Colonic mucosa (tissue), 4 donors: ENCODE measurements at regions of chr2 and their contacts with region 1.

Region 1: GRCh38 chr2:98412751-98413458 is 31.8 kb upstream of the INPP4A start:
- DNase-seq: peak; percentile 68
- H3K4me3 ChIP-seq: no peak overlapping the region
- H3K27ac ChIP-seq: no peak overlapping the region
- H3K4me1 ChIP-seq: no peaks in the 10 kb centered on the region
- H3K27me3 ChIP-seq: no peaks in the 10 kb centered on the region
- CTCF ChIP-seq: peak; percentile 57

Region 2: DNA sequence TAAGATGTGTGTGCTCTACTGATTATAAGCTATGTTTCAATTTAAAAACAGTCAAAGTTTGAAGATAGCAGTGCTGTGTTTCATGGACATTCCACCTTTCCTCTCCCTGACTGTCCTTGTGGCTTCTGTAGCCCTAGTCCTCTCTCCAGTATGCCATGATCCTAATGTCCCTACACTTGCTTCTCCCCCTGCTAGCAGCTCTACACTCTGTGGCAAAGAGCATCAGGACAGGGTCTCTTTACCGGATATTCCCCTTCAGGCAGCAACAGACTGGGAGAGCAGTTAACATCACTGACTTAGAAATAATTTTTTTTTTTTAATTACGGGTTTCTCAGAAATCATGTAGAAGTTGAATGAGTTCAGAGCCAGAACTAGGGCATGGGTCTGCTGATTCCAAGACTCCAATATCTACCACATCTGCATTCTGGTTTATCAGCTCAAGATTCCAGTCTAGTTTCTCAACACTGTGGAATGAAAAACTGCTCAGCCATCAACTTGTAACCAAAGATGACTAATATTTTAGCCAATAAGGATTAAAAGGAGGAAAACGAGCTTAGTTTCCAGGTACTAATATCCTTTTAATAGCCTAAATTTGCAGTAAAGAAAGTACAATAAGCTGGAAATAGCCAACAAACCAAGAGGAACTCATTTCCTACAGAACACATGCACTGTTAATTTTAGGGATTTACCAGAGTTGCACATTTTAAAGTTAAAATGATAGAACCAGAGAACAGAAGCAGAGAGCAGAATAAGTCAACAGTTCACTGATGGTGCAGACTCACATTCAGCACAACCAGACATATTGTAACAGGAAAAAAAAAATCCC is 462.4 kb before region 1 on chr2:
- intact Hi-C with region 1: no loop called
- DNase-seq: no peak
- H3K4me3 ChIP-seq: no peak overlapping the region
- H3K27ac ChIP-seq: no peak overlapping the region
- H3K4me1 ChIP-seq: no peaks in the 10 kb centered on the region
- H3K27me3 ChIP-seq: no peaks in the 10 kb centered on the region
- CTCF ChIP-seq: no peak

Region 3: DNA sequence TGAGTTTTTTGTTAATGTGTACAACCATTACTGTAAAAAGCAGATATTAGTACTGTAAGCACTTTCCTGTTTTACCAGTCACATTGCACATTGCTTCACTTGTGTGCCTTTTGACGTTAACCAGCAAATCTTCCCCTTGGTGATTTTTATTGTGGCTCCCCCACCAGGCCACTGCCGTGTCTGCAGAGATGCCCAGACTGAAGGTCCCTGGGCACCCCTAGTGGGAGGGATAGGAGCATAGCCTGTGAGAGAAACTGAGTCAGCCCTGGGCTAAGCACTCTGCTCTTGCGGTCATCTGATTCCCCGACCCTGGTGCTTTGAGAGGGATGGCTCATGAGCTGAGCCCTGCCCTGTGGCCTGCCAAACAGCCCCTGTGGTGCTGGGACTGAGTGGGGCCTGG is 105.2 kb after region 1 on chr2:
- intact Hi-C with region 1: loop called (anchors 2 kb)
- DNase-seq: peak; percentile 37
- H3K4me3 ChIP-seq: no peak overlapping the region
- H3K27ac ChIP-seq: no peak overlapping the region
- H3K4me1 ChIP-seq: no peaks in the 10 kb centered on the region
- H3K27me3 ChIP-seq: no peaks in the 10 kb centered on the region
- CTCF ChIP-seq: peak; percentile 47